SK-N-SH (cell line): ENCODE measurements at regions of chr22 and their contacts with region 1.

Region 1: GRCh38 chr22:37396488-37397084 is 30.7 kb downstream of the ELFN2 start:
- DNase-seq: peak; percentile 77
- H3K4me3 ChIP-seq: no peak overlapping the region
- H3K27ac ChIP-seq: no peak overlapping the region
- H3K4me1 ChIP-seq: peaks cover 0 to 19% of the 10 kb centered on the region in 2 experiments; a peak in 1 of 4 replicates
- H3K27me3 ChIP-seq: no peaks in the 10 kb centered on the region
- CTCF ChIP-seq: no peak
- EP300 ChIP-seq: no peak
- RAD21 ChIP-seq: no peak

Region 2: GRCh38 chr22:37330200-37331033 is 66.2 kb before region 1 on chr22:
- CTCF ChIA-PET with region 1: interaction called, 10 read pairs
- POLR2A ChIA-PET with region 1: no interaction called
- DNase-seq: peak; percentile 86
- H3K4me3 ChIP-seq: no peak overlapping the region
- H3K27ac ChIP-seq: no peak overlapping the region
- H3K4me1 ChIP-seq: peaks cover 13 to 26% of the 10 kb centered on the region in 2 experiments; a peak in 3 of 4 replicates
- H3K27me3 ChIP-seq: no peaks in the 10 kb centered on the region
- CTCF ChIP-seq: peak; percentile 30; the same call in 1 of the 2 replicates
- EP300 ChIP-seq: no peak
- RAD21 ChIP-seq: no peak